Activated T-helper 2 cell treated with anti-CD3 and anti-CD28 coated beads, Interferon-gamma antibody, Interleukin-2, Interleukin-4, amounts not matched to agents 10 μg/mL and 5 μg/mL and 100 μg/mL, durations not matched to agents 14 hours and 24 hours and 36 hours (primary cell): ENCODE measurements at regions of chr7 and their contacts with region 1.

Region 1: DNA sequence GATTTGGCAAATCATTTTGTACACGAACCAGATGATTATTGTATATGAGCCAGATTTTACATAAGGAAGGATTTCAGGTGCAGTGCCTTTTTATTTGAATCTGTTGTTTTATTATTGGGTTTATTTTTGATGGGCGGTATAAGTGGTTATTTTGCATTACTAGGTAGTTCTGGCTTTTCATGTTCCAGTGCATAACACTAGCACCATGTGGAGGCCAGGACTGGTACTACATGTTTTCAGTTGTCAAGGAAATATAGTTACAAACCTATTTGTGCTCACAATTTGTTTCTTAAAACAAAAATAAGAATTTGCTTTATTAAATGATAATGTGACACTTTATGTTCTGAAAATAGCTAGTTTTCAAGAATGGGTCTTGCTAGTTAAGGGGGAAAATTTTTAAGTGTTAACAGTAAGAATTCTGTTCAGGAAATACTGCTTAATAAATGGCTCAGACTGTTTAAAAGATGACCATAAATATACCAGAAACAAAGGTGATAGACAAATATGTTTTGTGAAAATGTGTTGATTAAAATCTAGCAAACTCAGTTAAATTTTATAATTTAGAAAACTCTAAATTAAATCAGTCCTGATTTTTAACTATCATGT is 7.1 kb upstream of the SEMA3E start:
- DNase-seq: no peak
- H3K4me3 Mint-ChIP-seq: no peak overlapping the region
- H3K27ac Mint-ChIP-seq: no peak overlapping the region
- H3K4me1 Mint-ChIP-seq: no peaks in the 10 kb centered on the region
- H3K27me3 Mint-ChIP-seq: no peaks in the 10 kb centered on the region

Region 2: GRCh38 chr7:83410989-83411591 is 245.0 kb before region 1 on chr7:
- intact Hi-C with region 1: loop called (anchors 5 kb)
- DNase-seq: no peak
- H3K4me3 Mint-ChIP-seq: no peak overlapping the region
- H3K27ac Mint-ChIP-seq: no peak overlapping the region
- H3K4me1 Mint-ChIP-seq: no peaks in the 10 kb centered on the region
- H3K27me3 Mint-ChIP-seq: no peaks in the 10 kb centered on the region

Region 3: DNA sequence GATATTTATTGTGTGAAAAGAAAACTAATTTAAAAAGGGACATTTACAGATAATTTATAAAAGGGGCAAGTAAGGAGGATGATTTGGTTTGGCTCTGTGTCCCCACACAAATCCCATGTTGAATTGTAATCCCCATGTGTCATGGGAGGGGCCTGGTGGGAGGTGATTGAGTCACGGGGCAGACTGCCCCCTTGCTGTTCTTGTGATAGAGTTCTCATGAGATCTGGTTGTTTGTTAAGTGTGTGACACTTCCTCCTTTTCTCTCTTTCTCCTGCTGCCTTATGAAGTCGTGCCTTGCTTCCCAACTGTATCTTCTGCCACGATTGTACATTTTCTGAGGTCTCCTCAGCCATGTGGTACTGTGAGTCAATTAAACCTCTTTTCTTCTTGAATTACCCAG is 163.9 kb after region 1 on chr7:
- intact Hi-C with region 1: no loop called
- DNase-seq: no peak
- H3K4me3 Mint-ChIP-seq: no peak overlapping the region
- H3K27ac Mint-ChIP-seq: no peak overlapping the region
- H3K4me1 Mint-ChIP-seq: no peaks in the 10 kb centered on the region
- H3K27me3 Mint-ChIP-seq: no peaks in the 10 kb centered on the region